MCF 10A (cell line): ENCODE measurements at regions of chr2 and their contacts with region 1.

Region 1: GRCh38 chr2:225660262-225661131 is 261.0 kb downstream of the NYAP2 start:
- DNase-seq: peak; percentile 77
- H3K4me3 Mint-ChIP-seq: no peak overlapping the region
- H3K27ac Mint-ChIP-seq: no peak overlapping the region
- H3K4me1 Mint-ChIP-seq: no peaks in the 10 kb centered on the region
- H3K27me3 Mint-ChIP-seq: peaks cover 21% of the 10 kb centered on the region
- CTCF ChIP-seq: peak; percentile 77

Region 2: GRCh38 chr2:224357098-224357901 is 1303.2 kb before region 1 on chr2:
- CTCF ChIA-PET with region 1: no interaction called
- POLR2A ChIA-PET with region 1: no interaction called
- intact Hi-C with region 1: loop called (anchors 2 kb)
- DNase-seq: peak; percentile 72
- H3K4me3 Mint-ChIP-seq: no peak overlapping the region
- H3K27ac Mint-ChIP-seq: no peak overlapping the region
- H3K4me1 Mint-ChIP-seq: peaks cover 7% of the 10 kb centered on the region
- H3K27me3 Mint-ChIP-seq: peaks cover 26% of the 10 kb centered on the region
- CTCF ChIP-seq: peak; percentile 80

Region 3: GRCh38 chr2:224778474-224778877 is 882.0 kb before region 1 on chr2:
- CTCF ChIA-PET with region 1: interaction called, 4 read pairs
- POLR2A ChIA-PET with region 1: no interaction called
- intact Hi-C with region 1: loop called (anchors 2 kb)
- DNase-seq: peak; percentile 75
- H3K4me3 Mint-ChIP-seq: no peak overlapping the region
- H3K27ac Mint-ChIP-seq: no peak overlapping the region
- H3K4me1 Mint-ChIP-seq: peaks cover 4% of the 10 kb centered on the region
- H3K27me3 Mint-ChIP-seq: no peaks in the 10 kb centered on the region
- CTCF ChIP-seq: peak; percentile 50

Region 4: DNA sequence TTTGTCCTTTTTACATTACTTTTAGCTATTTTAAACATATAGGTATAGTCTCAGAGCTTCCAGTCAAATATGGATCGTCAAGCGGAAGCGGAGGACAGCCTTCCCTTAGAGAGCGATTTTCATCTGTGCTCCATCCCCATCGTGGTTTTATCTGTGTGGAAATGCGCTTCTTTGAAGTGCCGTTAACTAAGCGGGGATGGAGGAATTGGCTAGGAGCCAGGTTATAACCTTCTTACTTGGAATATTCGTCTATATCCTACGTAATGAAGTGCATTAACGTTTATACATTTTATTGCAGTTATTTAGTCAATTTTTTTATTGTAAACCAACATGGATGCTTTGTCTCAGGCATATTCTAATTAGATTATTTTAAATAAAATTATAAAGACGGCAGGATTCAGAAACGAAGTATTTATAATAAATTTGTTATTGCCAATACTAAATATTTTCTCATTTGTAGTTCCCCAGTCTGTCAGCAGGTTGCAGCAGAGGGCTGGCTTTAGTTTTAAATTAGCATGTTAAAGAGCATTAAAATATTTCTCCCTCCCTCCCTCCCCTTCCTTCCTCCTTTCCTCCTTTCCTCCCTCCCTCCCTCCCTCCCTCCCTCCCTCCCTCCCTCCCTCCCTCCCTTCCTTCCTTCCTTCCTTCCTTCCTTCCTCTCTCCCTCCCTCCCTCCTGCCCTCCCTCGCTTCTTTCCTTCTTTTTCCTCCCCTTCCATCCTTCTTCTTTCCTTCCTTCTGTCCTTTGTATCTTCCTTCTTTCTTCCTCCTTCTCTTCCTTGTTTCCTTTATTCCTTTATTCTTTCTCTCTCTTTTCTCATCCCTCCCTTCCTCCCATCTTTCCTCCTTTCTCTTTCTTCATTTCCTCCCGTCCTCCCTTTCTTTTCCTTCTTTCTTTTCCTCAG is 537.7 kb before region 1 on chr2:
- CTCF ChIA-PET with region 1: interaction called, 39 read pairs
- POLR2A ChIA-PET with region 1: interaction called, 4 read pairs
- intact Hi-C with region 1: loop called (anchors 1 kb)
- DNase-seq: peak; percentile 45
- H3K4me3 Mint-ChIP-seq: no peak overlapping the region
- H3K27ac Mint-ChIP-seq: no peak overlapping the region
- H3K4me1 Mint-ChIP-seq: peaks cover 12% of the 10 kb centered on the region
- H3K27me3 Mint-ChIP-seq: no peaks in the 10 kb centered on the region
- CTCF ChIP-seq: peak; percentile 58

Region 5: DNA sequence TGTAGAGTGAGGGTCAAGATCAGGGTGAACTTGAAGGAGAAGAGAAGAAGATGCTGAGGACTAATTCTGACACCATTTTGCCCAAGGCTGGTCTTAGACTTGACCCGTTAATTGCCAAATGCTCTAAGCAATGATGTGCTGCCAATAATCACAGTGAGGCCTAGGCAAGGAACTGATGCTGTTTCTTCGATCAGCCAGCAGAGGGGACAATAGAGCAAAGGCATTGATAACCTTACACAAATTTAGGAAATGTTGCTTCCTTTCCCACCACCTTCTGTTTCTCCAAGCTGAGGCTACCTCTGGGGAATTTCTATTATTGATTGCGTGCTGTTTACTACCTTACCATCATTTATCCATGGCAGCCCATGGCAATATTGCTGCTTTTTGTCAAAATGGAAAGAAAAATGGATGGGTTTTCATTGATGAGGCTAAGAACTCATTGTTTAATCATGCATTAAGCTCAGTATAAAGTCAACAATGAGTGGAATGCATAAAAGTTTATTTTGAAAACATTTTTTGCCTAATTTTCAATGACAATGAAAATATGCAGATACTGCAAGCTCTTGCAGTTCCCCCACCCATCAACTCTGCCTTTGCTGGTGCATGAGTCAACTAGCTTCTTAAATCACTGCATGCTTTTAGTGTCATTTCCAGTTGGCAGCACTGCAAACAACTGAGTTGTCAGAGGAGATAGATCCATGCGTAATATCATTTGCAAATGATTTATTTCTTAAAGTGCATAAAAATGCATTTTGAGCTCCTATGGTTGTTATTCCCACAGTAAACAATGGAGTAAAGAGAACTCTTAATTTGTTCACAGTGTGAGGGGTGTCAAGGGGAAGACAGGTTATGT is 377.4 kb before region 1 on chr2:
- CTCF ChIA-PET with region 1: interaction called, 78 read pairs
- POLR2A ChIA-PET with region 1: no interaction called
- intact Hi-C with region 1: loop called (anchors 1 kb)
- DNase-seq: peak; percentile 57
- H3K4me3 Mint-ChIP-seq: no peak overlapping the region
- H3K27ac Mint-ChIP-seq: no peak overlapping the region
- H3K4me1 Mint-ChIP-seq: no peaks in the 10 kb centered on the region
- H3K27me3 Mint-ChIP-seq: peaks cover 33% of the 10 kb centered on the region
- CTCF ChIP-seq: peak; percentile 75

Region 6: DNA sequence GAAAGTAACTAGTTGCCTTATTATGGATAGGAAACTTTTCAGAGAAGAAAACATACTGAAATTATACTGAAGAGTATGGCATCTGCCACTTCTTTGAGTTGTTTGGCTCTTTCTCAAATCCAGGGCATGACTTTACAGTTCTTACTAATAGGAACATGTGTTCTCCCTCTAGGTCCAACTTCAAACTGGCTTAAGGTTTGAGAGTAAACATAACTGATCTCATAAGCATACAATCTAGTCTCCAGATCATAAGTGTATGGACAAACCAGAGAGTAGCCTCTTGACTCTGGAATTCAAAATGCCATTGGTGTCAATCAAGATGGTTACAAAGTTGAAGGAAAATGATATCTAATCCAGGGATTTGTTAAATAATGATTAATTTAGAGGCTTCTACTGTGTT is 159.5 kb before region 1 on chr2:
- CTCF ChIA-PET with region 1: interaction called, 12 read pairs
- POLR2A ChIA-PET with region 1: no interaction called
- intact Hi-C with region 1: no loop called
- DNase-seq: no peak
- H3K4me3 Mint-ChIP-seq: no peak overlapping the region
- H3K27ac Mint-ChIP-seq: no peak overlapping the region
- H3K4me1 Mint-ChIP-seq: no peaks in the 10 kb centered on the region
- H3K27me3 Mint-ChIP-seq: peaks cover 58% of the 10 kb centered on the region
- CTCF ChIP-seq: no peak

Region 7: GRCh38 chr2:225649274-225649673 is 11.2 kb before region 1 on chr2:
- CTCF ChIA-PET with region 1: interaction called, 16 read pairs
- POLR2A ChIA-PET with region 1: no interaction called
- intact Hi-C with region 1: no loop called
- DNase-seq: no peak
- H3K4me3 Mint-ChIP-seq: no peak overlapping the region
- H3K27ac Mint-ChIP-seq: no peak overlapping the region
- H3K4me1 Mint-ChIP-seq: no peaks in the 10 kb centered on the region
- H3K27me3 Mint-ChIP-seq: no peaks in the 10 kb centered on the region
- CTCF ChIP-seq: no peak

Region 8: DNA sequence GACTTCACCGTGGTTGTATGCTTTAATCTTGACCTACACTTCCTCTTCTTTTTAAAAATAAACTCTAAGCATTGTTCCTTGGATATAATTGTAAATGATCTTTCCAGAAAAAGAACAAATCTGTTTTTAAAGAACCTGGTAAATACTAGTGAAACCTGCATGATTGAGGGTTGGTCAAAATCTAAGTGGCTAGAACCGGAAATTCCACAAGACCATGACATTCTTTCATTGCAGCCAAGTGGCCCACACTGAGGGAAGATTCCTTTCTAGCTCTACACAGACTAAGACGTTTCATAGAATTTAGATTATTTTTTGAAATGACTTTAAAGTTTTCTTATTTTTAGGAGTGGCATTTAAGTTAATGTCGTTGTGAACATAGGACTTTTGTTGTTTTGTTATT is 95.7 kb after region 1 on chr2:
- CTCF ChIA-PET with region 1: no interaction called
- POLR2A ChIA-PET with region 1: no interaction called
- intact Hi-C with region 1: no loop called
- DNase-seq: no peak
- H3K4me3 Mint-ChIP-seq: no peak overlapping the region
- H3K27ac Mint-ChIP-seq: no peak overlapping the region
- H3K4me1 Mint-ChIP-seq: no peaks in the 10 kb centered on the region
- H3K27me3 Mint-ChIP-seq: no peaks in the 10 kb centered on the region
- CTCF ChIP-seq: no peak